ENCODE measurements at regions of chr4 and their contacts with region 1.

Region 1: DNA sequence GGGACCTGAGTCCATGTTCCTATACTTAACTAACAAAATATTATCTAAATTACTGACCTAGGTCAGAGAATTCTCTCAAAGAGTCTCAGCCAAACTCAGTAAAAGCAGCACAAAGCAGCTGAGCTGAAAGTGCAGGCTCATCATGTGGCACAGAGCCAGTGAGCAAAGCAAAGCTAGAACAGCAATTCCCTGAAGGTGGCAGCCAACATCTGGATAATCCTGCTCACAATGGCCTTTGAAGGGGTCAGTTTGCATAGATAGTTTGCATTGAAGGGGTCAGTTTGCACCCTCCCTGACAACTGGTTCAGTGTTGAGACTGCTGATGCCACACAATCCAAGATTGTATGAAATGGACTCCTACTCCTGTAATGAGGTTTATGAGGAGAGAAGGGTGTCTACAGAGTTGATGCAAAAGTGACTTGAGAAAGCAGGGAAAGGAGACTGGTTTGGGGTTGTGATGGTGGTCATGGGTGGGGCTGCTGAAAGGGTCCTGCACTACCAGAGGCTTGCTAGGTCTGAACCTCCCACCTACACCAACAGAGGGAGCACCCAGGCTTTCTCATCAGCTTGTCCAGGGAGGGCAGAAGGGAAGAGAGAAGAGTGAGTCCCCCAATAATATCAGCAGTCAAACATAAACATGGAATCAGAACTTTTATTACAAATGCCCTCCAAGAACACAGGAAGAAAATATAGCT is 39.7 kb downstream of the TRIM61 start:
- DNase-seq: peak; percentile 23
- H3K4me3 ChIP-seq: no peak overlapping the region
- H3K27ac ChIP-seq: no peak overlapping the region
- H3K4me1 ChIP-seq: no peaks in the 10 kb centered on the region
- CTCF ChIP-seq: peak; percentile 61

Region 2: GRCh38 chr4:164949448-164950143 is 11.9 kb after region 1 on chr4:
- CTCF ChIA-PET with region 1: interaction called, 7 read pairs
- POLR2A ChIA-PET with region 1: interaction called, 21 read pairs
- intact Hi-C with region 1: no loop called
- DNase-seq: peak; percentile 44
- H3K4me3 ChIP-seq: peak overlapping the region; percentile 12
- H3K27ac ChIP-seq: peak overlapping the region; percentile 41
- H3K4me1 ChIP-seq: peaks cover 38% of the 10 kb centered on the region
- CTCF ChIP-seq: peak; percentile 72

Region 3: GRCh38 chr4:165106518-165106917 is 168.8 kb after region 1 on chr4:
- CTCF ChIA-PET with region 1: no interaction called
- POLR2A ChIA-PET with region 1: no interaction called
- intact Hi-C with region 1: loop called (anchors 5 kb)
- DNase-seq: no peak
- H3K4me3 ChIP-seq: no peak overlapping the region
- H3K27ac ChIP-seq: no peak overlapping the region
- H3K4me1 ChIP-seq: peaks cover 5% of the 10 kb centered on the region
- CTCF ChIP-seq: no peak

Measured in OCI-LY7 (cell line).